ENCODE measurements at regions of chr2 and their contacts with region 1.

Region 1: DNA sequence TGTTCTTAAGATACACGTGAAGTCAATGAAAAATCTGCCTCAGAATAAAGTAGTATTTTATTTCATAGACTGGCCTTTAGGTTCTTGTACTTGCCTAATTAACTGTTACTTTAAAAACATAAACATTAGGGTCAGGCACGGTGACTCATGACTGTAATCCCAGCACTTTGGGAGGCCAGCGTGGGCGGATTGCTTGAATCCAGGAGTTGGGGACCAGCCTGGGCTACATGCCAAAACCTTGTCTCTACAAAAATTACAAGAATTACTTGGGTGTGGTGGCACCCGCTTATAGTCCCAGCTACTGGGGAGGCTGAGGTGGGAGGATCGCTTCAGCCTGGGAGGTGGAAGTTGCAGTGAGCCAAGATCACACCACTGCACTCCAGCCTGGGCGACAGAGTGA is 16.0 kb upstream of the SNORC start:
- DNase-seq: no peak
- H3K4me3 Mint-ChIP-seq: no peak overlapping the region
- H3K27ac Mint-ChIP-seq: no peak overlapping the region
- H3K4me1 Mint-ChIP-seq: peaks cover 4% of the 10 kb centered on the region
- H3K27me3 Mint-ChIP-seq: no peaks in the 10 kb centered on the region

Region 2: DNA sequence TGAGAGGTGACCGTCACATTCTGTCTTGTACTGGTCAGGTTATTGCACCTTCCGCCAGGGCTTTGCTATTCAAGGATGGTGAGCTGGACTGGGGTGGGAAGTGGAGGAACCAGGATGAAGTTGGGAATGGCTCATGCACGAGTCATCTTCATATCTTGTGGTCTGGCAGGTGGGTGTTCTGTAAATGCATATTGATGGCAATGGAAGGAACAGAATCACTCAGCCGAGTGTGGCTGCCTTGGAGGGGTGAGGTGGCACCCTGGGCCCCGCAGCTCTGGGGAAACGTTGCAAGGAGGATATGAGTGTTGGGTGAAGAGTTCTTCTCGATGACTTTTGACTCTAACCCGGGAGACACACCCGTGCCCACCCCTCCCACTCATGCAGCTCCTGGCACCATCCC is 179.6 kb after region 1 on chr2:
- CTCF ChIA-PET with region 1: interaction called, 20 read pairs
- POLR2A ChIA-PET with region 1: no interaction called
- intact Hi-C with region 1: loop called (anchors 2 kb)
- DNase-seq: peak; percentile 61
- H3K4me3 Mint-ChIP-seq: no peak overlapping the region
- H3K27ac Mint-ChIP-seq: no peak overlapping the region
- H3K4me1 Mint-ChIP-seq: peaks cover 11% of the 10 kb centered on the region
- H3K27me3 Mint-ChIP-seq: no peaks in the 10 kb centered on the region

Measured in activated CD4-positive, alpha-beta memory T cell treated with anti-CD3 and anti-CD28 coated beads for 36 hours (primary cell).